Activated CD4-positive, alpha-beta T cell treated with anti-CD3 and anti-CD28 coated beads for 36 hours (primary cell): ENCODE measurements at regions of chrX and their contacts with region 1.

Region 1: GRCh38 chrX:125295337-125295736 is 24.3 kb upstream of the TEX13C start:
- DNase-seq: no peak
- ATAC-seq: peak; percentile 74
- H3K4me3 Mint-ChIP-seq: peak overlapping the region; percentile 26
- H3K27ac Mint-ChIP-seq: peak overlapping the region; percentile 82
- H3K4me1 Mint-ChIP-seq: peaks cover 21% of the 10 kb centered on the region
- H3K27me3 Mint-ChIP-seq: no peaks in the 10 kb centered on the region

Region 2: DNA sequence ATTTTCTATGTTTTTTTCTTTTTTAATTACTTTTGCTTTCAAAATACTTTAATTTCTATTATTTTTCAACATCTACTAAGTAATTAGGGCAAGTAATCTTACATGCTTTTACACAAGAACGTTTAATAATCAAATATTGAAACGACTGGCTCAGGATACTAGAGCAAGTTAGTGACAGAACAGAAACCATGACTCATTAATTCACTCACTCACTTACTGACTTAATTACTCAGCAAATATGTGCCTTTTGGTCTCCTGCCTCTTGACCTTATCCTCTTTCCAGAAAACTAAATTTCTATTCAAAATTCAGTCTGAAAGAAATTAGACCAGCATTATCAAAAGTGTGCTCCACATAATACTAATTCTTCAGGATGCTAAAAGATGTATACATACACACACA is 290.5 kb before region 1 on chrX:
- CTCF ChIA-PET with region 1: no interaction called
- POLR2A ChIA-PET with region 1: no interaction called
- intact Hi-C with region 1: loop called in 1 of 2 experiments (anchors 5 kb)
- DNase-seq: no peak
- ATAC-seq: no peak
- H3K4me3 Mint-ChIP-seq: no peak overlapping the region
- H3K27ac Mint-ChIP-seq: no peak overlapping the region
- H3K4me1 Mint-ChIP-seq: no peaks in the 10 kb centered on the region
- H3K27me3 Mint-ChIP-seq: no peaks in the 10 kb centered on the region

Region 3: DNA sequence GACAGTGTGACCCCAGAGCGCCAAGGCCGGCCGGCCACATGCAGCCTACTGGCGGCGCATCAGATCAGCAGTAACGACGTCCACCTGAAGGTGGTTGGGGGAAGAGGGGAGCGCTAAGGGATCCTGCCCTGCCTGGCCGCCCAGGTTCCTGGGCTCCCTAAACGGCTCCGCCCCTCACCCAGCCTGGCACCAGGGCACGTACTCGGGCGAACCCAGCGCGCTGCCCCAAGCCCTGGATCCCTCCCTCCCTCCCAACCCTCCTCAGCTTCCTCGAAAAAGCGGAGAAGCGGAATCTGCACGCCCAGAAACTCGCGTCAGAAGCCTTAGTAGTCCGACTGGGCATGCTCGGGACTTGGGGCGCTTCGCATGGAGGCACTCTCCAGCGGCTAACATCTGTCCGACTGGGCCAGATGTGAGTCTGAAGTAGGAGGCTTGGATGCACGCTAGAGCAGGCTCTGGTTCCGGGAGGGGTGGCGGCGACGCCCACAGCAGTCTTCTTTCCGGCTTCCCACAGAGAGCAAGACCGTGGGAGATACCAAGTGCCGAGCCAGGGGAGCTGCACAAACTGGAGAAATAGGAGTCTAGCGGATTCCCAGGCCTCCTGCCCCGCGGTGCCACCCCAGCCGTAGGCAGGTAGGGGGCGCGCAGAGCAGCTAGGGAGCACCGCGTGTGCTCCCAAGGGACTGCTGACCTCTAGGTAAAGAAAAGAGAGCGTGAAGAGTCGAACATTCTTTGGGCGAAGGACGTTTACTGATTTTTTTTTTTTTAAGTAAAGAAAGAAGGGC is 90.0 kb before region 1 on chrX:
- CTCF ChIA-PET with region 1: no interaction called
- POLR2A ChIA-PET with region 1: no interaction called
- intact Hi-C with region 1: loop called (anchors 5 kb)
- DNase-seq: peak; percentile 50
- ATAC-seq: peak; percentile 55
- H3K4me3 Mint-ChIP-seq: peak overlapping the region; percentile 67
- H3K27ac Mint-ChIP-seq: no peak overlapping the region
- H3K4me1 Mint-ChIP-seq: peaks cover 18% of the 10 kb centered on the region
- H3K27me3 Mint-ChIP-seq: peaks cover 30% of the 10 kb centered on the region